PC-9 (cell line): ENCODE measurements at regions of chr11 and their contacts with region 1.

Region 1: GRCh38 chr11:24386546-24387397 is 110.1 kb upstream of the LUZP2 start:
- DNase-seq: no peak
- H3K4me3 ChIP-seq: no peak overlapping the region
- H3K27ac ChIP-seq: no peak overlapping the region
- H3K4me1 ChIP-seq: peaks cover 11% of the 10 kb centered on the region; the same call in 1 of the 2 replicates
- H3K27me3 ChIP-seq: no peaks in the 10 kb centered on the region
- CTCF ChIP-seq: peak; percentile 53

Region 2: GRCh38 chr11:22875869-22876473 is 1510.8 kb before region 1 on chr11:
- CTCF ChIA-PET with region 1: no interaction called
- POLR2A ChIA-PET with region 1: no interaction called
- intact Hi-C with region 1: loop called (anchors 5 kb)
- DNase-seq: peak; percentile 58 to 71
- H3K4me3 ChIP-seq: no peak overlapping the region
- H3K27ac ChIP-seq: no peak overlapping the region
- H3K4me1 ChIP-seq: no peaks in the 10 kb centered on the region
- H3K27me3 ChIP-seq: no peaks in the 10 kb centered on the region
- CTCF ChIP-seq: peak; percentile 87

Region 3: DNA sequence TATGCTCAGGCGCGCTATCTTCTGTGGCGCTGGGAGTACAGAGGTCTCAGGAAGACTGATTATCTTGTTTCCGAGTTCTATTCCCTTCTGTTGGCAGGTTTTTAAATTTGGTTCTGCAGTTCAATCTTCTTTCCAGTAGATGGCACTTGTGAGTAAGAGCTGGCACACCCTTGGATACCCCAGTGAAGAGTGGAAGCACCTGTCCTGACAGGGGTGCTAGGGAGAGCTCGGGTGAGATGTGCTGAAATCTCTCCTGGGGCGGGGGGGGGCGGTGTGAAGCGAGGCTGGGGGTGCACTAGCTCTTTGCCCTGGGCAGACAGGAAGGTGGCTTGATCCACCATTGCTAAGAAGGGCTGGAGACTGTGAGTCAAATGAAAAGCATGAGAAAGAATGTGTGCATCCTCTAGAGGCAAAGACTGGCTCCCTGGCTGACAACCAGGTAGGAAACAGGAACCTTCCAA is 846.6 kb before region 1 on chr11:
- CTCF ChIA-PET with region 1: no interaction called
- POLR2A ChIA-PET with region 1: no interaction called
- intact Hi-C with region 1: loop called (anchors 10 kb)
- DNase-seq: peak in 1 of 2 experiments; percentile 41
- H3K4me3 ChIP-seq: no peak overlapping the region
- H3K27ac ChIP-seq: no peak overlapping the region
- H3K4me1 ChIP-seq: no peaks in the 10 kb centered on the region
- H3K27me3 ChIP-seq: no peaks in the 10 kb centered on the region
- CTCF ChIP-seq: peak; percentile 74

Region 4: GRCh38 chr11:24171869-24172268 is 214.9 kb before region 1 on chr11:
- CTCF ChIA-PET with region 1: no interaction called
- POLR2A ChIA-PET with region 1: no interaction called
- intact Hi-C with region 1: no loop called
- DNase-seq: no peak
- H3K4me3 ChIP-seq: no peak overlapping the region
- H3K27ac ChIP-seq: no peak overlapping the region
- H3K4me1 ChIP-seq: no peaks in the 10 kb centered on the region
- H3K27me3 ChIP-seq: no peaks in the 10 kb centered on the region
- CTCF ChIP-seq: no peak